ENCODE measurements at regions of chr12 and their contacts with region 1.

Region 1: GRCh38 chr12:76274420-76275083 is 73.7 kb downstream of the BBS10 start:
- DNase-seq: peak; percentile 59
- H3K4me3 Mint-ChIP-seq: no peak overlapping the region
- H3K27ac Mint-ChIP-seq: no peak overlapping the region
- H3K4me1 Mint-ChIP-seq: peaks cover 12% of the 10 kb centered on the region
- H3K27me3 Mint-ChIP-seq: peaks cover 14% of the 10 kb centered on the region

Region 2: GRCh38 chr12:76158518-76159321 is 115.8 kb before region 1 on chr12:
- CTCF ChIA-PET with region 1: interaction called, 4 read pairs
- POLR2A ChIA-PET with region 1: interaction called, 5 read pairs
- intact Hi-C with region 1: loop called (anchors 1 kb)
- DNase-seq: peak; percentile 91
- H3K4me3 Mint-ChIP-seq: peak overlapping the region; percentile 16
- H3K27ac Mint-ChIP-seq: peak overlapping the region; percentile 25
- H3K4me1 Mint-ChIP-seq: peaks cover 16% of the 10 kb centered on the region
- H3K27me3 Mint-ChIP-seq: peaks cover 12% of the 10 kb centered on the region